ENCODE measurements at regions of chr12 and their contacts with region 1.

Region 1: DNA sequence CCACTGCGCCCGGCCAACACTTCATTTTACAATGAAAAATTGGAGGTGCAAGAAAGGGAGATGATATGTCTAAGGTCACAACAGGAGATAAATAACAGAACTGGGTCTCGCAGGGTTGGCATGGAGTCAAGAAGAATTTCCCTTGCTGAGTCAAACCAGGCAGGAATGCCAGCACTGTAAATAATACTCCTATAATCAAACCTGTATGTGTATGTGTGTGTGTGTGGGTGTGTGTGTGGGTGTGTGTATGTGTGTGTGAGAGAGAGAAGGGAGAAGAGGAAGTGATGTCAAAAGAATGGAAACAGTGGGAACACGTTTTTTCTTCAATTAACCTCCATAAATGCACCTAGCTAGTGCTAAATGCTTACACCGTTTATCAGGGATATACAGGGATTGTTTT is 70.4 kb downstream of the TMEM116 start:
- DNase-seq: no peak
- ATAC-seq: no peak
- H3K4me3 ChIP-seq: no peak overlapping the region
- H3K27ac ChIP-seq: no peak overlapping the region
- H3K4me1 ChIP-seq: peaks cover 0 to 30% (median 5%) of the 10 kb centered on the region in 9 donors
- H3K27me3 ChIP-seq: no peaks in the 10 kb centered on the region
- CTCF ChIP-seq: no peak

Region 2: GRCh38 chr12:111730420-111730819 is 212.1 kb before region 1 on chr12:
- intact Hi-C with region 1: no loop called
- DNase-seq: no peak
- ATAC-seq: no peak
- H3K4me3 ChIP-seq: no peak overlapping the region
- H3K27ac ChIP-seq: no peak overlapping the region
- H3K4me1 ChIP-seq: no peaks in the 10 kb centered on the region
- H3K27me3 ChIP-seq: no peaks in the 10 kb centered on the region
- CTCF ChIP-seq: no peak

Region 3: GRCh38 chr12:111864917-111865316 is 77.6 kb before region 1 on chr12:
- intact Hi-C with region 1: no loop called
- DNase-seq: no peak
- ATAC-seq: no peak
- H3K4me3 ChIP-seq: no peak overlapping the region
- H3K27ac ChIP-seq: no peak overlapping the region
- H3K4me1 ChIP-seq: no peaks in the 10 kb centered on the region
- H3K27me3 ChIP-seq: no peaks in the 10 kb centered on the region
- CTCF ChIP-seq: no peak

Region 4: DNA sequence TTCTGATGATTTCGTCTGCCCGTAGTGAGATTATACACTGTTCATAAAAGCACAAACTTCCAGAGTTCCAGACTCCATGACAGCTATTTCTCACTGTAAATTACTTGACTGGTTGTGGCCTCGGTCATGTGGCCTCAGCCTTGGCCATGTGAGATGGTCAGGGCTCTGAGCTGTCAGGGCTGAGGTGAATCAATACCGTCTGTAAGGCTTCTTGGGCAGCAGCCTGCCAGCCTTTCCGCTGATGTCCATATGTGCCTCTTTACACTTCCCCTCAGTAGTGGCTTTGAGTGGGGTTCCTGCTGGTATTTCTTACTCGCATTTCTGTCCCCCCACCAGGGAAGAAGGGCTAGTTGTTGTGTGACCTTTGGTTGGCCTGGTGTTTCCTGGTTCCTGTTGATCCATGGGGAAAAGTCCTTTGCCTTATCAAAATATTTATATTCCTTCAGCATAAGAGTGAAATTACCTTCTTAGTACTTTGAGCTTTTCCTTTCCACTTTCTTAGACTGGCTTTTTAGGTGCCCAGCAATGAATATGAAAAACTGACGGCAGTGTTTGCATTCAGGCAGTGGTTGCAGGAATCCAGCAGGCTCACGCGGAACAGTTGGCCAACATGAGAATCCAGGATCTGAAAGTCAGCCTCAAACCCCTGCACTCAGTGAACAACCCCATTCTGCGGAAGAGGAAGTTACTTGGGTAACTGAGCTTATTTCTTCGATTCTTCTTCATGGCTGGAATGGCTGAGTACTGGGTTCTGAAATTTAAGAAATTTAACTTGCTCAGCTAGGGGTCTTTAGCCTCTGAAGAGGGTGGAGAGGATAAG is 54.4 kb before region 1 on chr12:
- intact Hi-C with region 1: no loop called
- DNase-seq: no peak
- ATAC-seq: no peak
- H3K4me3 ChIP-seq: no peak overlapping the region
- H3K27ac ChIP-seq: peak overlapping the region in 1 of 10 donors; percentile 57
- H3K4me1 ChIP-seq: peaks cover 0 to 11% (median 0%) of the 10 kb centered on the region in 9 donors
- H3K27me3 ChIP-seq: no peaks in the 10 kb centered on the region
- CTCF ChIP-seq: no peak

Region 5: GRCh38 chr12:112005419-112006395 is 63.1 kb after region 1 on chr12:
- intact Hi-C with region 1: loop called (anchors 2 to 10 kb)
- DNase-seq: no peak
- ATAC-seq: peak; percentile 29 to 93 (median 66)
- H3K4me3 ChIP-seq: peak overlapping the region in 9 of 10 donors; percentile 10 to 43 (median 39)
- H3K27ac ChIP-seq: peak overlapping the region; percentile 31 to 79 (median 66)
- H3K4me1 ChIP-seq: peaks cover 0 to 35% (median 5%) of the 10 kb centered on the region in 9 donors
- H3K27me3 ChIP-seq: peaks cover 0 to 2% (median 0%) of the 10 kb centered on the region in 7 donors
- CTCF ChIP-seq: no peak

Region 6: DNA sequence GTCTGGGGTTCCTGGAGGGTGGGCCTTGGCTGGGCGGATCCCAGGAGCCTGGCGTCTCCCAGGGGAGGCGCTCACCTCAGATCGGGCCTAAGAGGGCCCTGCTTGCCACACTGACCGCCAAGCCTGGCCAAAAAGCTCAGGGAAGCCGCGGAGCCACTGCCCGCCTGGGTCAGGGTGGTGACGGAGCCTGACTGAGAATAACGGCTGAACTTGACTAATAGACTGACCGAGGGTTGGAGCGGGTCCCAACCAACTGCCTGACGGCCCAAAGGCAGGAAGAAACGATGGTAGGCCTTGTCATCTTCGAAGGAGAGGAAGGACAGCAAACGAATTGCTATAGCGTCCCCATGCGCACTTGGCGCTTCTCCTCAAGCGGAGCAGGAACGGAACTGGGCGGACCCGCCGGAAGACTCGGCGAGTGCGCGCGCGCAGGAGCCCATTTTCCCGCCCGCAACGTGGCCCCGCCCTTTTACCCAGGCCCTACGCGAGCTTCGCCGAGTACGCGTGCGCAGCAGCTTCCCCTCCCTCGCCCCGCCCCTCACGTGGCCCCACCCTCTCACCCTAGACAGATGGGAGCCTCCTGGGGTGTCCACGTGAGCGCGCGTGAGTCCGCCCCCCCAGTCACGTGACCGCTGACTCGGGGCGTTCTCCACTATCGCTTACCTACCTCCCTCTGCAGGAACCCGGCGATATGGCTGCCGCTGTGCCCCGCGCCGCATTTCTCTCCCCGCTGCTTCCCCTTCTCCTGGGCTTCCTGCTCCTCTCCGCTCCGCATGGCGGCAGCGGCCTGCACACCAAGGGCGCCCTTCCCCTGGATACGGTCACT is 70.4 kb after region 1 on chr12 and contains the starts of genes ERP29 and TMEM116:
- intact Hi-C with region 1: loop called in 9 of 10 experiments (anchors 5 to 10 kb)
- DNase-seq: peak; percentile 99 to 100
- ATAC-seq: peak; percentile 92 to 97 (median 95)
- H3K4me3 ChIP-seq: peak within 1 kb of the TSS; percentile 73 to 99 (median 90)
- H3K27ac ChIP-seq: peak within 1 kb of the TSS; percentile 92 to 98 (median 95)
- H3K4me1 ChIP-seq: peaks cover 2 to 48% (median 27%) of the 10 kb centered on the region in 9 donors
- H3K27me3 ChIP-seq: no peaks in the 10 kb centered on the region
- CTCF ChIP-seq: peak; percentile 41 to 73 (median 63)
- total RNA-seq, gene ERP29: 36.3 to 77.4 (median 46.6) TPM
- total RNA-seq, gene TMEM116: 31.2 to 54.1 (median 40.7) TPM

Measured in heart right ventricle (tissue), 16 donors.